T-cell (primary cell): ENCODE measurements at regions of chr2 and their contacts with region 1.

Region 1: GRCh38 chr2:95076784-95077529 is 44.7 kb downstream of the MRPS5 start:
- DNase-seq: peak; percentile 78 to 95 (median 89)
- ATAC-seq: peak; percentile 65 to 79 (median 72)
- H3K4me3 ChIP-seq: peak overlapping the region; percentile 10 to 56
- H3K4me3 Mint-ChIP-seq: peak overlapping the region; percentile 70 to 88 (median 81)
- H3K27ac ChIP-seq: peak overlapping the region; percentile 79
- H3K27ac Mint-ChIP-seq: peak overlapping the region; percentile 98 to 99
- H3K4me1 ChIP-seq: peaks cover 41 to 69% of the 10 kb centered on the region in 2 experiments
- H3K4me1 Mint-ChIP-seq: peaks cover 74 to 76% (median 76%) of the 10 kb centered on the region in 3 donors
- H3K27me3 ChIP-seq: peaks cover 0 to 24% of the 10 kb centered on the region in 2 experiments
- H3K27me3 Mint-ChIP-seq: no peaks in the 10 kb centered on the region

Region 2: DNA sequence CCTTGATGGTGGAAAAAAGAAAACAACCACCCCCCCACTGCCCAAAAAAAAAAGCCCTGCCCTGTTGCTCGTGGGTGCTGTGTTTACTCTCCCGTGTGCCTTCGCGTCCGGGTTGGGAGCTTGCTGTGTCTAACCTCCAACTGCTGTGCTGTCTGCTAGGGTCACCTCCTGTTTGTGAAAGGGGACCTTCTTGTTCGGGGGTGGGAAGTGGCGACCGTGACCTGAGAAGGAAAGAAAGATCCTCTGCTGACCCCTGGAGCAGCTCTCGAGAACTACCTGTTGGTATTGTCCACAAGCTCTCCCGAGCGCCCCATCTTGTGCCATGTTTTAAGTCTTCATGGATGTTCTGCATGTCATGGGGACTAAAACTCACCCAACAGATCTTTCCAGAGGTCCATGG is 23.4 kb before region 1 on chr2:
- CTCF ChIA-PET with region 1: interaction called, 14 to 30 read pairs
- POLR2A ChIA-PET with region 1: interaction called in 1 of 2 experiments, 6 read pairs
- DNase-seq: peak in 2 of 35 experiments; percentile 30 to 45
- ATAC-seq: peak in 3 of 4 experiments; percentile 10 to 41 (median 35)
- H3K4me3 ChIP-seq: no peak overlapping the region
- H3K4me3 Mint-ChIP-seq: peak overlapping the region in 1 of 3 donors; percentile 54
- H3K27ac ChIP-seq: no peak overlapping the region
- H3K27ac Mint-ChIP-seq: peak overlapping the region; percentile 95 to 96
- H3K4me1 ChIP-seq: peaks cover 4 to 66% of the 10 kb centered on the region in 2 experiments
- H3K4me1 Mint-ChIP-seq: peaks cover 64 to 84% (median 71%) of the 10 kb centered on the region in 3 donors
- H3K27me3 ChIP-seq: peaks cover 0 to 9% of the 10 kb centered on the region in 2 experiments
- H3K27me3 Mint-ChIP-seq: no peaks in the 10 kb centered on the region

Region 3: DNA sequence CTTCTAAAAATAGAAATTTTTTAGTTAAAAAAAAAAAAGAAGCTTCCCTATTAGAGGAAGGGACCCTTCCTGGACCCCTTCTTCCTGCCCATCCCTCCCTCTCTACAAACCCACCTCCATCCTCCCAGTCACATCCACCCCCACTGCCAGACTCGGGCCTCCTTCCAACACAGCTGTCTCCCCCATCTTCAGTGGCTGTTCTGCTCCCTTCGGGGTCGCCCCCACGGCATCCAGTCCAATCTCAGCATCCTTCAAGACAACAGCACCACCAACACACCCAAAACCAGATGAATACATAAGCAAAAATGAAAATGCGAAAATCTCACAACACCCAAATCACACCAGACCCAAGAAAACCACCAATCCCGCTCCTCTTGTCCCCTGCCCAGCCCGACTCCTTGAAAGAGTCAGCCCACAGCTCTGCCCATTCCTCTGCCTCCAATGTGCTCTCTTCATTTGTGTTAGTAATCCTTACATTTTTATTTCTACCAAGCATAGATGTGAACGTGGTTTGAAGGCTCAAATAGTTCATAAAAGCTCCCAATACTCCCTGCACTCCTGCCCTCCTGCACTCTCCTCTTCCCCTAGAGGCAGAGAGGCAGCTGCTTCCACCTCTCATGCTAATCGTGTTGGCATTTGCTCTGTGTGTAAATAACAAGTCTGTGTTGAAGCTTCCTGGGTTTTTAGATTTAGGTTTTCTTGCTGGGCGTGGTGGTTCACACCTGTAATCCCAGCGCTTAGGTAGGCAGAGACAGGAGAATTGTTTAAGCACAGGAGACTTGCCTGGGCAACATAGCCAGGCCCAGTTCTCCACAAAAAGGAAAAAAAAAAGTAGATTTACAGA is 14.5 kb before region 1 on chr2:
- CTCF ChIA-PET with region 1: interaction called, 10 to 17 read pairs
- POLR2A ChIA-PET with region 1: no interaction called
- DNase-seq: peak in 2 of 35 experiments; percentile 5 to 12
- ATAC-seq: peak; percentile 14 to 52 (median 40)
- H3K4me3 ChIP-seq: no peak overlapping the region
- H3K4me3 Mint-ChIP-seq: peak overlapping the region in 1 of 3 donors; percentile 78
- H3K27ac ChIP-seq: peak overlapping the region; percentile 52
- H3K27ac Mint-ChIP-seq: peak overlapping the region; percentile 91 to 93
- H3K4me1 ChIP-seq: peaks cover 18 to 27% of the 10 kb centered on the region in 2 experiments
- H3K4me1 Mint-ChIP-seq: peaks cover 33 to 54% (median 36%) of the 10 kb centered on the region in 3 donors
- H3K27me3 ChIP-seq: no peaks in the 10 kb centered on the region
- H3K27me3 Mint-ChIP-seq: no peaks in the 10 kb centered on the region

Region 4: DNA sequence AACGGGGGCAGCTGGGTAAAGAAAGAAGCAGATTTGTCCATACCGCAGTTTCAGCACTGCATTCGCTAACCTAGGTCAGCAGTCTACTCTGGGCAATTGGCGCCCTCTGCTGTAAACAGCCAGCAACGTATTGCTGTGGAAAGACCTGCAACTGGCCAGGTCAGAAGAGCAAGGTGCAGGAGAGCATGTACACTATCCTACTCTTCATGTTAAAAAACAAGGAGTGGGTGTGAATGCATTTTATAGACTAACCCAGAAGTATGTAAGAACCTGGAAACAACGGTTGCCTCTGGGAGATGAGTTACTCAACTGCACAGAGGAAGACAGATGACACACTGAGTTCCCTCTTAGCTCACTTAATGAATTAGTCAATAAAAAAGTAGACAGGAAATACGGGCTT is 38.5 kb after region 1 on chr2:
- CTCF ChIA-PET with region 1: interaction called, 14 to 29 read pairs
- POLR2A ChIA-PET with region 1: interaction called in 1 of 2 experiments, 6 read pairs
- DNase-seq: peak; percentile 45 to 84 (median 68)
- ATAC-seq: peak; percentile 96 to 99 (median 98)
- H3K4me3 ChIP-seq: no peak overlapping the region
- H3K4me3 Mint-ChIP-seq: no peak overlapping the region
- H3K27ac ChIP-seq: no peak overlapping the region
- H3K27ac Mint-ChIP-seq: no peak overlapping the region
- H3K4me1 ChIP-seq: peaks cover 11 to 12% of the 10 kb centered on the region in 2 experiments
- H3K4me1 Mint-ChIP-seq: peaks cover 43 to 49% (median 46%) of the 10 kb centered on the region in 3 donors
- H3K27me3 ChIP-seq: no peaks in the 10 kb centered on the region
- H3K27me3 Mint-ChIP-seq: no peaks in the 10 kb centered on the region